ENCODE measurements at regions of chr7 and their contacts with region 1.

Region 1: DNA sequence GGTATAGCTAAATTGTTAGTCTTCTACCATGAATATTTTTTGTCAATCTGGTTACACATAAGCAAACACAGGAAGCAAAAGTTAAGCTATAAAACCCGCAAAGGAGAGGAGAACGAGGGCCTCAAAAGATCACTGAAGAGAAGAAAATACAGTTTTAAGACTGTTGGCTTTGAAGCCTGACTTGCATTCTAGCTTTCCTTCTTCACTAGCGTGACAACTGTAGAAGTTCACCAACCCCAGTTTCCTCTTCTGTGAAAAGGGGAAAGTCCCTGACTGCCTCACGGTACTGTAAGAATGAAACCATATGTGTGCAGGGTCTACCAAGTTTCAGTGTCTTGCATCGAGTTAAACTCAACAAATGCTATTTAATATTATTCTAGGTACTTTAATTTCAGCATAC is 7.5 kb upstream of the LRRN3 start:
- DNase-seq: peak; percentile 71
- H3K4me3 Mint-ChIP-seq: peak overlapping the region; percentile 33
- H3K27ac Mint-ChIP-seq: peak overlapping the region; percentile 88
- H3K4me1 Mint-ChIP-seq: peaks cover 77% of the 10 kb centered on the region
- H3K27me3 Mint-ChIP-seq: no peaks in the 10 kb centered on the region

Region 2: DNA sequence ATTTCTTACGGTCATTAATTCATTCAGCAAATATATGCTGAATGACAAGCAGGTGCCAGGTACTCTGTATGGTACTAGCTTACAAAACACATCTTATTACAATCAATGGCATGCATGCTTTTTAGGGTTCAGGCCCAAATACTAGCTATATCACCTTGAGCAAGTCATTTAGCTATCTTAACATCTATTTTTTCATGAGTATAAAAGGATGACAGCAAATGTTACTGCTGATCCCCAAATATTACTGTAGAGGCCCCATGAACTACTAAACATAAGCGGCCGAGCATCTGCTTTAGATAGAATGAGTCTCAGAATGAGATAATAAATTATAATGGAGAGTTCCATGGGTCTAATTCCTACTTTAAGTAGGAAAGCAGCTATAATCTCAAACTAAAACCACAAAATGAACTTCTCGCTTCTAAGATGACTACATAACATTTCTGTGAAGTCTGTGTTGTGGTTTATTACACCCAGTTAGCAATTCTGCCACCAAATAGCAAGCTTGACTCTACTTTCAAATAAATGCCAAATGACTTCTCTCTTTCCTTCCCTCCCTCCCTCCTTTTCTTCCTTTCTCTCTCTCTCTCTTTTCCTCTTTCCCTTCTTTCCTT is 106.2 kb before region 1 on chr7:
- CTCF ChIA-PET with region 1: interaction called, 3 read pairs
- POLR2A ChIA-PET with region 1: interaction called, 11 read pairs
- DNase-seq: no peak
- H3K4me3 Mint-ChIP-seq: peak overlapping the region; percentile 55
- H3K27ac Mint-ChIP-seq: peak overlapping the region; percentile 79
- H3K4me1 Mint-ChIP-seq: peaks cover 25% of the 10 kb centered on the region
- H3K27me3 Mint-ChIP-seq: no peaks in the 10 kb centered on the region

Region 3: GRCh38 chr7:111012799-111013675 is 70.4 kb before region 1 on chr7:
- CTCF ChIA-PET with region 1: interaction called, 8 read pairs
- POLR2A ChIA-PET with region 1: interaction called, 34 read pairs
- DNase-seq: peak; percentile 61
- H3K4me3 Mint-ChIP-seq: peak overlapping the region; percentile 57
- H3K27ac Mint-ChIP-seq: peak overlapping the region; percentile 90
- H3K4me1 Mint-ChIP-seq: peaks cover 64% of the 10 kb centered on the region
- H3K27me3 Mint-ChIP-seq: no peaks in the 10 kb centered on the region

Region 4: GRCh38 chr7:111029574-111030251 is 53.7 kb before region 1 on chr7:
- CTCF ChIA-PET with region 1: interaction called, 4 read pairs
- POLR2A ChIA-PET with region 1: interaction called, 54 read pairs
- DNase-seq: no peak
- H3K4me3 Mint-ChIP-seq: no peak overlapping the region
- H3K27ac Mint-ChIP-seq: peak overlapping the region; percentile 64
- H3K4me1 Mint-ChIP-seq: peaks cover 51% of the 10 kb centered on the region
- H3K27me3 Mint-ChIP-seq: no peaks in the 10 kb centered on the region

Region 5: DNA sequence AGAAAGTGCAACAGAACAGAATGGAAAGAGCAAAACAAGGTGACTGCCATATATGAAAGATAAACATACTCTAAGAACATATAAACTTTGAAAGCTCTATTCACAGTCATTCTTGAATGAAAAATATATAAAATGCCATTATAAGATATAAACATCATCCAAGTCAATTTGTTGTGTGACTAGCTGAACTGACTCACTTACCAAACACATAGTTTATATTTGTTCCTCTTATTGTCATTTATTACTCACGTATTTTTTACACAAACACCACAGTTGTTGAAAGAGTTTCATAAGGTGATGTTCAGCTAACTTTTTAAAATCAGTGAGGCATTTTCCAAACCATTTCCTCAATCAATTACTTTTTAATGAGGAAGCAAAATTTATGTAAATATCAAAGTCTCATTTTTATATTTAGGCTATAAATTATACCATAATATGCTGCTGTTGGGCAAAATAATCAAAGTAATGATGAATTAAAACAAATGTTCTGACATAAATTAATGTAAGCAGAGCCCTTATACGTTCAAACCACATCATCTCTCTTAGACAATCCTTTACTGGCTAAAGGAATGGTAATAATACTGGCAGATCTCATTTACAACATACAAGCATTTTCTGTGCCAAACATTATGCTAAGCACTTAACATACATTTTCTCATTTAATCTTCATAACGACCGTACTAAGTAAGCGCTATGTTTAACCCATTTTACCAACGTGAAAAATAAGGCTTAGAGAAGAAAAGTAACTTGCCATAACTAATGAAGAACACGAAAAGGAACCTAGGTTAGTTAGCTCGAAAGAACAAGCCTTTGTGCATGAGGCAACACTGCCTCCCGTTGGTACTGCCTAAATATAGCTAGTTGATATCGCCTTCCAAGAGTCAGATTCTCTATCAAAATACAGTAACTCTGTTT is 14.9 kb after region 1 on chr7:
- CTCF ChIA-PET with region 1: interaction called, 10 read pairs
- POLR2A ChIA-PET with region 1: interaction called, 52 read pairs
- DNase-seq: peak; percentile 73
- H3K4me3 Mint-ChIP-seq: peak overlapping the region; percentile 37
- H3K27ac Mint-ChIP-seq: peak overlapping the region; percentile 18
- H3K4me1 Mint-ChIP-seq: peaks cover 37% of the 10 kb centered on the region
- H3K27me3 Mint-ChIP-seq: no peaks in the 10 kb centered on the region

Region 6: GRCh38 chr7:111654343-111654742 is 570.9 kb after region 1 on chr7:
- CTCF ChIA-PET with region 1: no interaction called
- POLR2A ChIA-PET with region 1: no interaction called
- DNase-seq: no peak
- H3K4me3 Mint-ChIP-seq: no peak overlapping the region
- H3K27ac Mint-ChIP-seq: no peak overlapping the region
- H3K4me1 Mint-ChIP-seq: no peaks in the 10 kb centered on the region
- H3K27me3 Mint-ChIP-seq: peaks cover 2% of the 10 kb centered on the region